ENCODE measurements at regions of chr4 and their contacts with region 1.

Region 1: DNA sequence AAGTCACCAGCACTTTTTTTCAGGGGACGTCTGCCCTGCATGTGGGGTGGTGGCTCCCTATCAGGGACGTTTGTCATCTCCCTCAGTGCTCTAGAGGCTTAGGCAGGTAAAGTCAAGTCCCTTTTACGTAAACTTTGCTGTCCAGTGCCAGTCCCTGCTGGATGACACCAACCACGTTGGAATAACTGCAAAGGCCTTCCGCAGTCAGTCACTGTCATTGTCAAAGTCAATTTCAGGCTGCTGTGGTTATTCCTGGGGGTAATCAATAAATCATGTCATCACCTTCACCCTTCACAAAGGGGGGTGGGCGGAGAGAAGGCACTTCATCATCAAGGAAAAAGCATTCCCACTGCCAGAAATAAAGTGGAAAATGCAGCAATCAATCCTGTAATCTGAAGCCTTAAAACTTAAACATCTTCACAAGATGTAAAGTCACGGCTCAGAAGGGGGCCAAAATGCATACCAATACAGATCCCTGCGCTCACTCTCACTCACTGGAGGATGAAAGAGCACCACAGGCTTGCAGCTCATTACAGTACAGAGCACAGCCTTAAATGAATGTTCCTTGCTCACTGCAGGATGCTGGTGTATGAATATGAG is 56.2 kb downstream of the CLDN22 start:
- DNase-seq: no peak
- H3K4me3 ChIP-seq: no peak overlapping the region
- H3K27ac ChIP-seq: no peak overlapping the region
- H3K4me1 ChIP-seq: no peaks in the 10 kb centered on the region
- H3K27me3 ChIP-seq: no peaks in the 10 kb centered on the region
- CTCF ChIP-seq: no peak
- POLR2A ChIP-seq: no peak

Region 2: GRCh38 chr4:182155806-182156205 is 1108.1 kb before region 1 on chr4:
- intact Hi-C with region 1: no loop called
- DNase-seq: no peak
- H3K4me3 ChIP-seq: no peak overlapping the region
- H3K27ac ChIP-seq: no peak overlapping the region
- H3K4me1 ChIP-seq: no peaks in the 10 kb centered on the region
- H3K27me3 ChIP-seq: peaks cover 0 to 4% of the 10 kb centered on the region in 2 donors
- CTCF ChIP-seq: no peak
- POLR2A ChIP-seq: no peak

Region 3: DNA sequence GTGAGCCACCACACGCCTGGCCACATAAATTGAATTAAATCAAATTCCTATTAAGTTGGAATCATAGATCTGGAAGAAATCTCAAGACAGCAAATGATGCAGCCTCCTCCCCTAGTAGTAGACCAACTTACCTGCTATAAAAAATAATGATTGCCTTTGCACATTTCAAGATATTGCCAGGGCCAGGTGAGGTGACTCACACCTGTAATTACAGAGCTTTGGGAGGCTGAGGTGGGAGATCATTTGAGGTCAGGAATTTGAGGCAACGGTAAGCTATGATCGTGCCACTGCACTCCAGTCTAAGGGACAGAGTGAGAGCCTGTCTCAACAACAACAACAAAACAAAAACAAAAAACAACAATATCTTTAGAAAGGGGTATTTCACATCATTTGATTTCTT is 181.8 kb before region 1 on chr4:
- intact Hi-C with region 1: loop called (anchors 1 kb)
- DNase-seq: no peak
- H3K4me3 ChIP-seq: no peak overlapping the region
- H3K27ac ChIP-seq: no peak overlapping the region
- H3K4me1 ChIP-seq: no peaks in the 10 kb centered on the region
- H3K27me3 ChIP-seq: no peaks in the 10 kb centered on the region
- CTCF ChIP-seq: no peak
- POLR2A ChIP-seq: no peak

Region 4: GRCh38 chr4:183407128-183407585 is 143.3 kb after region 1 on chr4:
- intact Hi-C with region 1: no loop called
- DNase-seq: peak; percentile 58 to 77
- H3K4me3 ChIP-seq: peak overlapping the region; percentile 41 to 67 (median 50)
- H3K27ac ChIP-seq: peak overlapping the region; percentile 68 to 83
- H3K4me1 ChIP-seq: no peaks in the 10 kb centered on the region
- H3K27me3 ChIP-seq: no peaks in the 10 kb centered on the region
- CTCF ChIP-seq: peak; percentile 79 to 83 (median 82)
- POLR2A ChIP-seq: no peak